Calu3 (cell line): ENCODE measurements at regions of chr11 and their contacts with region 1.

Region 1: GRCh38 chr11:115279813-115280761 is 224.1 kb downstream of the CADM1 start:
- DNase-seq: no peak
- H3K4me3 Mint-ChIP-seq: no peak overlapping the region
- H3K27ac Mint-ChIP-seq: no peak overlapping the region
- H3K4me1 Mint-ChIP-seq: peaks cover 9% of the 10 kb centered on the region
- H3K27me3 Mint-ChIP-seq: peaks cover 14% of the 10 kb centered on the region
- CTCF ChIP-seq: no peak

Region 2: DNA sequence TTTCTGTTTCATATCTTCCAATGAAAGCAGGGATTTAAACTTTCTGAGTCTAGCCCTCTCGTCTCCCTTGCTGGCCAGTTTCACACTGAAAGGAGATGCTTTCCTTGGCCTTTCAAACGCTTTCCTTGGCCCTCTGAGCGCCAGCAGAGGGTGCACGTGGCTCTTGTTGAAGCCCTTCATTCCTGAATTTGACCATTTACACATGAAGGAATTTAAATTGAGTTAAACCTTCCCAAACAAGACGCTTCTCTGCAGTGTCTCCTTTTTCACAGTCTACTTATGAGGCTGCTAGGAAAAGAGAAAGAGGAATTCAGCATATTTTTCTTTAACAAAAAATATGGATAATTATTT is 962.3 kb before region 1 on chr11:
- CTCF ChIA-PET with region 1: no interaction called
- intact Hi-C with region 1: loop called (anchors 10 kb)
- DNase-seq: no peak
- H3K4me3 Mint-ChIP-seq: no peak overlapping the region
- H3K27ac Mint-ChIP-seq: no peak overlapping the region
- H3K4me1 Mint-ChIP-seq: peaks cover 22% of the 10 kb centered on the region
- H3K27me3 Mint-ChIP-seq: no peaks in the 10 kb centered on the region
- CTCF ChIP-seq: no peak

Region 3: DNA sequence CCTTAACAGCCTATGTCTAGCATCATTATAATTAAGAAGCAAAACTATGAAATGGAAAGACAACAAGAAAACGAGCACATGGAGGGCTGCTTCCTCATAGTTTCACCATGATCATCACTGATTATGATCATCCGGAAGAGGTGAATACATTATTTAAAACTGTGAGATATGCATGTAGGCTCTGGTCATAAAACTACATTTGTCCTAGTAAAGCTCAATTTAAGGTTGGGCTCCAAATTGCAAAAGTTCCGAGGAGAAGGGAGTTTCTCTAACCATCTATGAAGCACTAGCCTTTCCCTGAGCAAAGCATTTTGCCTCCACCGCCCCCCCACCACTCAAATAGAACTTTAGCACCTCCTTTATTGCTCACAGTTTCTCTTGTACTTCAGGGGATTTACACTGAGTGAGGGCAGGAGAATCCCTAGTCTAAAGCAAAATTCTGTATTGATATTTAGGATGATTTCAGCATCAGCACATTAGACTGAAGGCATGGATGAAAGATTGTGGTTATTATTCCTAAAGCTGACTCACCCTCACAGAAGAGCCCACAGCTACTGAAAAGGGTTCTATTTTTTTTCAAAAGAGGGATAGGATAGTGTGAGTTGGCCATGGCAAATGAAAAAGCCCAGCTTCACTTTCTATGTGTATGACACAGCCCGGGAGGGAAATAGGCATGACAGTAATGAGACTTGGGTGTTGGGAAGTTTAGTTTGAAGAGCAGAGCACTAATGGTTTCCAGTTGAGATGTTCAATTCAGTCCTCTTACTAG is 20.8 kb after region 1 on chr11:
- CTCF ChIA-PET with region 1: no interaction called
- intact Hi-C with region 1: no loop called
- DNase-seq: no peak
- H3K4me3 Mint-ChIP-seq: no peak overlapping the region
- H3K27ac Mint-ChIP-seq: no peak overlapping the region
- H3K4me1 Mint-ChIP-seq: no peaks in the 10 kb centered on the region
- H3K27me3 Mint-ChIP-seq: peaks cover 24% of the 10 kb centered on the region
- CTCF ChIP-seq: no peak